Activated CD4-positive, alpha-beta T cell treated with anti-CD3 and anti-CD28 coated beads for 36 hours (primary cell): ENCODE measurements at regions of chr3 and their contacts with region 1.

Region 1: DNA sequence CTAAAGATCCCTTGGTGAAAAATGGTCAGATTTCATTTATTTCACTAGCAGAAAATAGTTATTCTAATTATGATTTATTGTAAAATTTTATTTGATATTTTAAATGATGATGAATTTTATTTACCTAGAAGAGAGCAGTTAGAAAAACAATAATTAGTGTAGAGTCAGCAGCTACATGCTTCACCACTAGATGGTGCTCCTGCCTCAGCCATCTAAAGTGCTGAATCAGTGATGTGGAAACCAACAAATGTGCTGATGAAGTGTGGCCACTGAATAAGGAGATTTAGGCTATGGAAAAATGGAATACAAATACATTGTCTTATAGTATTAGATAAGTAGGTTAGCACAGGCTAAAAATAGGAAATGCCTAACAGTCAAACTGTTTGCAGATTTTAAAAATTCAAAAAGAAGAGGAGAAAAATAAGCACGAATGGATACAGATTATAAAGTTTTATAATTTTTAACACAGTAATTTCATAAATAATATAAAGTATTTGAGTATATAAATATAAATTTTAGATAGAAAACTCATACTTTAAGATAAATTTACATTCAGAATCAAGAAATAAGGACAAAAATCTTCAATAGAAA is 109.8 kb downstream of the PPP2R3A start:
- DNase-seq: peak; percentile 83
- ATAC-seq: peak; percentile 55
- H3K4me3 Mint-ChIP-seq: no peak overlapping the region
- H3K27ac Mint-ChIP-seq: no peak overlapping the region
- H3K4me1 Mint-ChIP-seq: no peaks in the 10 kb centered on the region
- H3K27me3 Mint-ChIP-seq: no peaks in the 10 kb centered on the region

Region 2: DNA sequence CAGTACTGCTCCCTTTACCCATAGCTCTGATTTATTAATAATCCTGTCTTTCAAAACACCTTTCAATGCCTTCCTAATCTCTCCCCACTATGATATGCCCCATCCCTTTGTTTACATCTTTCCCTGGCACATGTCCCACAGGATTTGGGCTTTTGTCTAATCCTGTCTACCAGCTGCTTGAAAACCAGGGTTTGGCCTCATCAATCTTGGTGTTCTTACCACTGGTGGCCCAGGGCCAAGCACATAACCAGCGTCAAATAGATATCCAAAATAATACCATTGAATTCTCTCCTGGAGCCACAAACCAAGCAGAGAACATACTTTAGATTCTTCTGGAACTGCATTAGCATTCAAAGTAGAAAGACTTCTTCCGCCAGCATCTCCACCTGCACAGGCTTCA is 214.6 kb before region 1 on chr3:
- CTCF ChIA-PET with region 1: no interaction called
- POLR2A ChIA-PET with region 1: no interaction called
- intact Hi-C with region 1: no loop called
- DNase-seq: no peak
- ATAC-seq: no peak
- H3K4me3 Mint-ChIP-seq: no peak overlapping the region
- H3K27ac Mint-ChIP-seq: no peak overlapping the region
- H3K4me1 Mint-ChIP-seq: no peaks in the 10 kb centered on the region
- H3K27me3 Mint-ChIP-seq: no peaks in the 10 kb centered on the region

Region 3: DNA sequence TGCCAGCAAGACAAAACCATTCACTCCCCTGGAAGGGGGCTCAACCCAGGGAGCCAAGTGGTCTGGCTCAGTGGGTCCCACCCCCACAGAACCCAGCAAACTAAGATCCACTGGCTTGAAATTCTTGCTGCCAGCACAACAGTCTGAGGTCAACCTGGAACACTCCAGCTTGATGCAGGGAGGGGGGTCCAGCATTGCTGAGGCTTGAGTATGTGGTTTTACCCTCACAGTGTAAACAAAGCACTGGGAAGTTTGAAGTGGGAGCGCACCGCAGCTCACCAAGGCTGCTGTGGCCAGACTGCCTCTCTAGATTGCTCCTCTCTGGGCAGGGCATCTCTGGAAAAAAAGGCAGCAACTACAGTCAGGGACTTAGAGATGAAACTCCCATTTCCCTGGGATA is 39.1 kb after region 1 on chr3:
- CTCF ChIA-PET with region 1: no interaction called
- POLR2A ChIA-PET with region 1: no interaction called
- intact Hi-C with region 1: no loop called
- DNase-seq: no peak
- ATAC-seq: no peak
- H3K4me3 Mint-ChIP-seq: no peak overlapping the region
- H3K27ac Mint-ChIP-seq: no peak overlapping the region
- H3K4me1 Mint-ChIP-seq: peaks cover 7% of the 10 kb centered on the region
- H3K27me3 Mint-ChIP-seq: peaks cover 6% of the 10 kb centered on the region

Region 4: GRCh38 chr3:136177876-136178275 is 102.6 kb after region 1 on chr3:
- CTCF ChIA-PET with region 1: interaction called, 4 read pairs
- POLR2A ChIA-PET with region 1: no interaction called
- intact Hi-C with region 1: loop called in 1 of 2 experiments (anchors 5 kb)
- DNase-seq: no peak
- ATAC-seq: peak; percentile 40
- H3K4me3 Mint-ChIP-seq: no peak overlapping the region
- H3K27ac Mint-ChIP-seq: no peak overlapping the region
- H3K4me1 Mint-ChIP-seq: peaks cover 56% of the 10 kb centered on the region
- H3K27me3 Mint-ChIP-seq: no peaks in the 10 kb centered on the region

Region 5: DNA sequence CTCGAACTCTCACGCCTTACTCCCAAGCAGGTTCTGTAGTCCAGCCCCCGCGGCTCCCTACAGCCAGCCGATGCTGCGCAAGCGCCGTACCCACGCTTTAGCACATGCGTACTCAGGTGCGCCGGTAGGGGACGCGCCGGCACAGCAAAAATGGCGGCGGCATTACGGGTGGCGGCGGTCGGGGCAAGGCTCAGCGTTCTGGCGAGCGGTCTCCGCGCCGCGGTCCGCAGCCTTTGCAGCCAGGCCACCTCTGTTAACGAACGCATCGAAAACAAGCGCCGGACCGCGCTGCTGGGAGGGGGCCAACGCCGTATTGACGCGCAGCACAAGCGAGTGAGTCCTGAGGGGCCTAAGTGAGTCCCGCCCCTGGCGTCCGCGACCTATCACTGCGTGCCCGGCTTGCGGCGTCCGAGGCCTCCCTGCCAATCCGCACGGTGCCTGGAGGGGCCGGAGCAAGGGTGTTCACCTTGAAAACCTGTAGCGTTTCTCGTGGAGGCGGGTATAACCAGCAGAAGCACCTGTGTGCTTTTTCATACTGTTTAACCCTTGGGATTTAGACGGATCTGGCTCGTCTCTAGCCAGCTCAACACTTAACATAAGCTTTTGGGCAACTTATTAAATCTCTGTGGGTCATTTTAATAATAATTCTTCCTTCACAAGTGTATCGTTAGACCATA is 175.1 kb after region 1 on chr3 and contains the start of gene PCCB:
- CTCF ChIA-PET with region 1: interaction called, 3 read pairs
- POLR2A ChIA-PET with region 1: no interaction called
- intact Hi-C with region 1: loop called (anchors 1 to 5 kb)
- DNase-seq: peak; percentile 96
- ATAC-seq: peak; percentile 99
- H3K4me3 Mint-ChIP-seq: peak within 1 kb of the TSS; percentile 83
- H3K27ac Mint-ChIP-seq: peak within 1 kb of the TSS; percentile 91
- H3K4me1 Mint-ChIP-seq: peaks cover 15% of the 10 kb centered on the region
- H3K27me3 Mint-ChIP-seq: no peaks in the 10 kb centered on the region
- total RNA-seq, gene PCCB: 45.3 to 51.8 TPM

Region 6: GRCh38 chr3:136350132-136350531 is 274.8 kb after region 1 on chr3:
- CTCF ChIA-PET with region 1: interaction called, 4 read pairs
- POLR2A ChIA-PET with region 1: no interaction called
- intact Hi-C with region 1: loop called (anchors 5 to 10 kb)
- DNase-seq: no peak
- ATAC-seq: no peak
- H3K4me3 Mint-ChIP-seq: no peak overlapping the region
- H3K27ac Mint-ChIP-seq: no peak overlapping the region
- H3K4me1 Mint-ChIP-seq: peaks cover 15% of the 10 kb centered on the region
- H3K27me3 Mint-ChIP-seq: no peaks in the 10 kb centered on the region

Region 7: DNA sequence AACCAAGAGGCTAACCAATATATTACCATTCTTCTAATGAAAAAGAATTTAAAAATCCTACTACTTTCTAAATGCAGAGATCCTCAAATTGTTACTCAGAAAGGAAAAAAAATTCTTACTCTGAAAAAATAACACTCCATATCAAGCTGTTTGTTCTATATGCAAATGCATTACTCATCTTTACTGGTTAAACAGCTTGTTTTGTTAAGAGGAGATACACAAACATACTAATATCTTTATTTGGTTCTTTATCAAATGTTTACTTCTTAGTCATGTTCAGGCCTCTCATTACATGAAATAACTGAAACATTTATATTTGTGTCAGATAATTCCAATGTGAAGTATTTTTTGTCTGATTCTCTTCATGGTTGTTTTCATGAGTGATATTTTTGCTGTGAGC is 321.6 kb after region 1 on chr3:
- CTCF ChIA-PET with region 1: interaction called, 3 read pairs
- POLR2A ChIA-PET with region 1: no interaction called
- intact Hi-C with region 1: loop called in 1 of 2 experiments (anchors 10 kb)
- DNase-seq: no peak
- ATAC-seq: no peak
- H3K4me3 Mint-ChIP-seq: no peak overlapping the region
- H3K27ac Mint-ChIP-seq: no peak overlapping the region
- H3K4me1 Mint-ChIP-seq: no peaks in the 10 kb centered on the region
- H3K27me3 Mint-ChIP-seq: no peaks in the 10 kb centered on the region

Region 8: DNA sequence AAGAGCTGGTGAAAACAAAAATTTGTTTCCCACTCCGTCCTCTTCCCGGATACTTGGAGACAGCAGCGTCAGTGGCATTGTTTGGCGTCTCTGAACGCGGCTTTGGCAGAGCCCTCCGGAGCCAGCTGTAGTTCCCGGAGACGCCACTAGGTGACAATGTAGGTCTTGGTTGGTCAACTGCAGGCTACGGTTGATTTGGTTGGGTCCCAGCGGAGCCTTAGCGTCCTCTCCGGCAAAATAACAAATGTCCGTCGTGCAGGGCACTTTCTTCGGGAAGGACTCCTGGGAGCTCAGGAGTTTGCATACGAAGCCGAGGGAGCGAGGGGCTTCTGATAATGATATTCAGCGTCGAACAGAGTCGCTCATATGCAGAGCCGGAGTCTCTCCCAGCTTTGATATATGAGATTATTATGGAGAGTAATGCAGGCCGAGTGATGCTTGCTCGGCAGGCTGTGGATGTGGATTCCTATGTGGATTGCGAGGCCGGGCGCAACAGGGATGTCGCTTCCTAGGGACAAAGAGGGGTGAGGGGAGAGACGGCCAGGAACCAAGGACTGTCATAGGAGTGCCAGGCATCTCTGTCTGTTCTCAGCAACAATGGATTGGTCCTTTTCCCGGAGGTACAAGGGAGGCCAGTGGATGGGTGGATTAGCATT is 957.3 kb after region 1 on chr3:
- CTCF ChIA-PET with region 1: interaction called, 4 read pairs
- POLR2A ChIA-PET with region 1: no interaction called
- intact Hi-C with region 1: loop called in 1 of 2 experiments (anchors 1 kb)
- DNase-seq: peak; percentile 92
- ATAC-seq: peak; percentile 93
- H3K4me3 Mint-ChIP-seq: peak overlapping the region; percentile 54
- H3K27ac Mint-ChIP-seq: no peak overlapping the region
- H3K4me1 Mint-ChIP-seq: peaks cover 7% of the 10 kb centered on the region
- H3K27me3 Mint-ChIP-seq: peaks cover 22% of the 10 kb centered on the region